ENCODE measurements at regions of chr12 and their contacts with region 1.

Region 1: GRCh38 chr12:108457006-108457733 is 57.9 kb upstream of the FICD start:
- DNase-seq: peak; percentile 68
- H3K4me3 ChIP-seq: no peak overlapping the region
- H3K27ac ChIP-seq: peak overlapping the region in 1 of 2 experiments; percentile 90; a peak in 2 of 4 replicates
- H3K4me1 ChIP-seq: peaks cover 0 to 14% of the 10 kb centered on the region in 2 experiments; a peak in 2 of 4 replicates
- H3K27me3 ChIP-seq: no peaks in the 10 kb centered on the region
- CTCF ChIP-seq: peak; percentile 66
- EP300 ChIP-seq: no peak
- RAD21 ChIP-seq: peak; percentile 93

Region 2: DNA sequence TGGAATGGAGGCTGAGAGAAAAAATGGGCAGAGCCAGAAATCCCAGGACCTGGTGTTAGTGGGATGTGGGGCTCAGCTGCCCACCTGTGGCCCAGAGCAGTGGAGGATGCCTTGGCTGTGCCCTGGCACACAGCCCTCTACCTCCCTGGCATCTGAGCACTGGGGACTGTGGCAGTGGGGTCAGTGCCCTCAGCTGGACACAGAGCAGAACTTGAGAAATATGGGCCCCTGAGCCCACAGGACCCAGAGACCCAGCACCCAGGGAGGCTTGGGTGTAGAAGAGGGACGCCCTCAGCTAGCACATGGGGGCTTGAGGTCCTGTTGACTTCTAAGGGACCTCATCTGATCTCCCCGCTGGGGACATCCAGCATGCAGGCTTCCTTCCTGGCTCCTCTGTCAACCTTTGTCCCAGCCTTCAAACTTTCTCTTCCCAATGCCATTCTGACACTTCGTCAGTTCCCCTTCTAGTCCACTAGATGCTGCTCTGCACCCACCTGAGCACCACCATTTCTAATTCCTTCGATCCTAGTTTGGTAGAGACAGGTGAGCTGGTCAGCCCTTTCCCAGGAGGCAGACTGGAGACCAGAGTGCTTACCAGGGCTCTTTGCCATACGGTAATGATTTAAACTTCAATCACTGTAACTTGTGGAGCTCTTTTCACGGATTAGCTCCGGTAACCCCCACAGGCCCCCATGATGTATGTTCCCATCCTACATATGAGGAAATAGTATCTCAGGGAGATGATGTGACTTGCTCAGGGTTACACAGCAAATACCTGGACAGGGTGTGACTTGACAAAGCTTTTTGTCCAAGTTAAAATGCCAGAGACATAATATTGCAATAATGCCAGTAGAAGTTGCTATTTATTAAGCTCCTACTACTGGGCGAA is 539.0 kb before region 1 on chr12:
- CTCF ChIA-PET with region 1: interaction called, 15 read pairs
- POLR2A ChIA-PET with region 1: no interaction called
- DNase-seq: peak; percentile 69
- H3K4me3 ChIP-seq: no peak overlapping the region; a peak in 1 of 4 replicates
- H3K27ac ChIP-seq: no peak overlapping the region
- H3K4me1 ChIP-seq: no peaks in the 10 kb centered on the region; a peak in 1 of 4 replicates
- H3K27me3 ChIP-seq: no peaks in the 10 kb centered on the region
- CTCF ChIP-seq: peak; percentile 55
- EP300 ChIP-seq: no peak
- RAD21 ChIP-seq: peak; percentile 92

Region 3: GRCh38 chr12:108175310-108175709 is 281.9 kb before region 1 on chr12:
- CTCF ChIA-PET with region 1: interaction called, 13 read pairs
- POLR2A ChIA-PET with region 1: no interaction called
- DNase-seq: peak; percentile 63
- H3K4me3 ChIP-seq: no peak overlapping the region
- H3K27ac ChIP-seq: peak overlapping the region in 1 of 2 experiments; percentile 69; a peak in 2 of 4 replicates
- H3K4me1 ChIP-seq: peaks cover 0 to 11% of the 10 kb centered on the region in 2 experiments; a peak in 1 of 4 replicates
- H3K27me3 ChIP-seq: no peaks in the 10 kb centered on the region
- CTCF ChIP-seq: no peak
- EP300 ChIP-seq: no peak
- RAD21 ChIP-seq: peak; percentile 73

Region 4: DNA sequence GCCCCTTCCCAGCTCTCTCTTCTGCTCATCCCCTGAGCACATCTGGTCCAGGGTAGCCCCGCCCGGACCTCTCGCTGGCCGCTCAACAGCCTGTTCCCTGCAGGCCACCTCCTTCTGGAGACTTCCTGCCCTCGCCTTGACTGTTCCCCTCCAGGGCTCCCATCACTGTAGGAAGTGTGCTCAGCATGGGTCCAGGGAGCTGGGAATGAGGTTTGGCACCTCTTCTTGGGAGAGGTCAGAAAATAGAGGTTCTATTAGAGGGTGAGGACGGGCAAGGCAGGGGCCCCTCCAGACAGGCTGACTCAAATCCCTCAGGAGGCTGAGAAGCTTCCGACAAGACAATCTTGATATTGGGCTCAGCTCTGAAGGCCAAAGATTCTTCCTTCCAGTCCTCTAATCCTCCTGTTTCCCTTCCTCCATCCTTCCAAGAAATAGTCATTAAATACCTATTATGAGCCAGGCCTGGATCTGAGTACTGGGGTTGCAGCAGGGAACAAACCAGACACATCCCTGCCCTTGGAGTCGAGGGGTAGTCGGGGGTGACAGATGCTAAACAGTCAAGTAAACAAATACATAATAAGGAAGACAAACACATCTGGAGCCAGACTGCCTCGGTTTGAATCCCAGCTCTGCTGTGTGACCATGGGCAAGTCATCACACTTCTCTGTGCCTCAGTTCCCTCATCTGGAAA is 148.6 kb before region 1 on chr12:
- CTCF ChIA-PET with region 1: interaction called, 23 read pairs
- POLR2A ChIA-PET with region 1: no interaction called
- DNase-seq: no peak
- H3K4me3 ChIP-seq: no peak overlapping the region
- H3K27ac ChIP-seq: peak overlapping the region in 1 of 2 experiments; percentile 34; a peak in 1 of 4 replicates
- H3K4me1 ChIP-seq: peaks cover 0 to 89% of the 10 kb centered on the region in 2 experiments; a peak in 2 of 4 replicates
- H3K27me3 ChIP-seq: no peaks in the 10 kb centered on the region
- CTCF ChIP-seq: no peak
- EP300 ChIP-seq: no peak
- RAD21 ChIP-seq: no peak

Region 5: DNA sequence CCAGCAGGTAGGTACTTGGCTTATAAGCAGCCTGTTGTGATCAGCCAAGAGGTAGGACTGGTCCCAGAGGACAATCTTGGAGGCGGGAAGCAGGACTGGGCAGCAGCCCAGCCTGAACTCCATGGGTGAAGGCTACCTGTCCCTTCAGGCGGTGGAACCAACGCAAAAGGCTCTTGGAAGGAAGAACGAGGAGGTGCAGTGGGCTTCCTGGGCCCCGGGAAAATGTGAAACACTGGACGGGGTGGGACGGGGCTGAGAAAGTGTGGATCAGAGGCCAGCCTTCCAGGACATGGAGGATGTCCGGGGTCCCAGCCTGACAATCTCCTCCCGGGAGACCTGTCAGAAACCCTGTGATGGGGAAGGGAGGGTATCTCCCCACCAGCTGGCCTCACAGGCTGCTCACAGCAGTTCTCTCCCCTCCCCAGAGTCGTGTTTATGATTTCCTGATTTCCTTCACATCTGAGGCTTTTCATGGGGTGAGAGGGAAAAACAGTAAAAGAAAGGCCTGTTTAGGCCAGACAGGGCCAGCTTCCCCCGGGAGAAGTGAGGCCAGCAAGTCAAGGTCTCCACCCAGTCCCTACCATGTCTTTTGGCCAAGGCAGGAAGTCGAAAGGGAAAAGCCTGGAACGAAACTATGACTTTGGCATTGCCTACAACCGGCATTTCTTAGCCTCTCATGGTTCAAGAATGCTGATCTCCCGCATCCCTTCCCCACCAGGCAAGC is 129.4 kb before region 1 on chr12:
- CTCF ChIA-PET with region 1: interaction called, 12 read pairs
- POLR2A ChIA-PET with region 1: no interaction called
- DNase-seq: no peak
- H3K4me3 ChIP-seq: no peak overlapping the region
- H3K27ac ChIP-seq: no peak overlapping the region
- H3K4me1 ChIP-seq: peaks cover 0 to 27% of the 10 kb centered on the region in 2 experiments; a peak in 1 of 4 replicates
- H3K27me3 ChIP-seq: no peaks in the 10 kb centered on the region
- CTCF ChIP-seq: no peak
- EP300 ChIP-seq: no peak
- RAD21 ChIP-seq: no peak

Region 6: GRCh38 chr12:108446766-108447165 is 10.4 kb before region 1 on chr12:
- CTCF ChIA-PET with region 1: interaction called, 15 read pairs
- POLR2A ChIA-PET with region 1: no interaction called
- DNase-seq: no peak
- H3K4me3 ChIP-seq: no peak overlapping the region
- H3K27ac ChIP-seq: peak overlapping the region in 1 of 2 experiments; percentile 96; a peak in 2 of 4 replicates
- H3K4me1 ChIP-seq: peaks cover 0 to 30% of the 10 kb centered on the region in 2 experiments; a peak in 3 of 4 replicates
- H3K27me3 ChIP-seq: no peaks in the 10 kb centered on the region
- CTCF ChIP-seq: no peak
- EP300 ChIP-seq: no peak
- RAD21 ChIP-seq: no peak

Region 7: GRCh38 chr12:108918206-108918605 is 461.0 kb after region 1 on chr12:
- CTCF ChIA-PET with region 1: no interaction called
- POLR2A ChIA-PET with region 1: no interaction called
- DNase-seq: no peak
- H3K4me3 ChIP-seq: no peak overlapping the region
- H3K27ac ChIP-seq: no peak overlapping the region
- H3K4me1 ChIP-seq: no peaks in the 10 kb centered on the region
- H3K27me3 ChIP-seq: no peaks in the 10 kb centered on the region
- CTCF ChIP-seq: no peak
- EP300 ChIP-seq: no peak
- RAD21 ChIP-seq: no peak